ENCODE measurements at regions of chr7 and their contacts with region 1.

Region 1: DNA sequence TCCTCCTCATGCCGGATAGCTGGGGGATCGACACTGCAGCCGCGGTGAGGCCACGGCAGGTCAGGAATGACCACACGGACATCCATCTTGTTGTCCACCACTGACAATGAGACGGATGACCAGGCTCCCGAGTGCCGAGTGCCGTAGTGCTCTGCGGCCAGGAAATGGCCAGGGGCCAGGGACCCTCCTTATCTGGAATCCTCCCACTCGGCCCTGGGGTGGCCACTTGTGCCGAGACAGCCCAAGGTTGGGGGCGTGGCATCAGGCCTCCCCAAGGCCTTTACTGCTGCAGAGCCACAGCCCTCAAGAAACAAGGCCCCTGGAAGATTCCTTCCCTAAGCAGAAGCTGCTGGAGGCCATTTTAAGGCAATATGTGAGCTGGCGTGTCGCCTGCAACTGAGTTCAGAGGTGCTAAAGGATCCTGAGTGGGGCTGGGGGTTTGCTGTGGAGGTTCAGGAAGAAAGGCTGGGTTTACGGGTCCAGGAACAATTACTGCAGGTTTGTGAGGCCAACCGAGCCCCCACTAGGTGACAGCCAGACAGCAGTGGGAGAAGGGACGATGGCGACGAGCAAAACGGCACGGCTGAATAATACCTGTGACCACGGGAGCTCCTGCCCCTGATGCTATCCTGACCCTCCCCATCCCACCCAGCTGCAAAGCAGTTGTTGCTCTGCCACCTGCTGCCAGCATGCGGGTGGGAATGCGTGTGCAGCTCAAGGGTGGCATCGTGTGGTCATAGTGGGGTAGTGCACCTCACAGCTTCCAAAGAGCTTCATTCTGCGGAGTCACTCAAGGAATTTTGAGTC is 31.6 kb upstream of the LEP start:
- DNase-seq: peak; percentile 37 to 61
- ATAC-seq: peak; percentile 92

Region 2: DNA sequence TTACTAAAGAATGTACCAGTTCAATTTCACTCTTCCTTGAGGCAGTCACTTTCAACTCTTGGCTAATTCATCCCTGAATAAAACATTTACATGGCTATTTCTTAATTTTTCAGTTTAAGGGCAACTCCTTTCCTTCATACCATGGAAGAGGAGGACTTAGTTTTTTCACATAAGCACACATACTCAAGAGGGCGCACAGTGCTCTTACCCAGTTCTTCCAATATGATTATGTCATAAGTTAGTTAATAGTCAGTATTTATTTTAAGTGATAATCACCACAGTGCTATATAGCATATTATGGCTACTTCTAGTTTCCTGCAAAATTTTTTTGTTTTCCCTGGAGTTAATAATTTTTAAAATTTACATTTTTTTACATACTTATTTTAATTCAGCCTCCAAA is 498.8 kb before region 1 on chr7:
- intact Hi-C with region 1: loop called (anchors 2 to 10 kb)
- DNase-seq: no peak
- ATAC-seq: no peak

Region 3: GRCh38 chr7:127717502-127718339 is 491.7 kb before region 1 on chr7:
- intact Hi-C with region 1: loop called in 1 of 2 experiments (anchors 10 kb)
- DNase-seq: no peak
- ATAC-seq: no peak

Region 4: GRCh38 chr7:128135515-128136214 is 73.8 kb before region 1 on chr7:
- intact Hi-C with region 1: loop called in 1 of 2 experiments (anchors 10 kb)
- DNase-seq: peak in 1 of 2 donors; percentile 64
- ATAC-seq: peak; percentile 94

Region 5: GRCh38 chr7:128728598-128728997 is 519.2 kb after region 1 on chr7:
- intact Hi-C with region 1: no loop called
- DNase-seq: no peak
- ATAC-seq: no peak

Measured in left colon (tissue), 2 donors.